Activated T-helper 1 cell treated with anti-CD3 and anti-CD28 coated beads, Interleukin-12 subunit alpha, Interleukin-12 subunit beta, Interleukin-2, Interleukin-4 antibody, amounts not matched to agents 30 ng/mL and 10 ng/mL and 1 ng/mL, durations not matched to agents 14 hours and 24 hours and 36 hours (primary cell): ENCODE measurements at regions of chr22 and their contacts with region 1.

Region 1: GRCh38 chr22:19970479-19971275 is 29.1 kb upstream of the TXNRD2 start:
- DNase-seq: peak; percentile 69
- H3K4me3 Mint-ChIP-seq: no peak overlapping the region
- H3K27ac Mint-ChIP-seq: no peak overlapping the region
- H3K4me1 Mint-ChIP-seq: peaks cover 9% of the 10 kb centered on the region
- H3K27me3 Mint-ChIP-seq: no peaks in the 10 kb centered on the region

Region 2: DNA sequence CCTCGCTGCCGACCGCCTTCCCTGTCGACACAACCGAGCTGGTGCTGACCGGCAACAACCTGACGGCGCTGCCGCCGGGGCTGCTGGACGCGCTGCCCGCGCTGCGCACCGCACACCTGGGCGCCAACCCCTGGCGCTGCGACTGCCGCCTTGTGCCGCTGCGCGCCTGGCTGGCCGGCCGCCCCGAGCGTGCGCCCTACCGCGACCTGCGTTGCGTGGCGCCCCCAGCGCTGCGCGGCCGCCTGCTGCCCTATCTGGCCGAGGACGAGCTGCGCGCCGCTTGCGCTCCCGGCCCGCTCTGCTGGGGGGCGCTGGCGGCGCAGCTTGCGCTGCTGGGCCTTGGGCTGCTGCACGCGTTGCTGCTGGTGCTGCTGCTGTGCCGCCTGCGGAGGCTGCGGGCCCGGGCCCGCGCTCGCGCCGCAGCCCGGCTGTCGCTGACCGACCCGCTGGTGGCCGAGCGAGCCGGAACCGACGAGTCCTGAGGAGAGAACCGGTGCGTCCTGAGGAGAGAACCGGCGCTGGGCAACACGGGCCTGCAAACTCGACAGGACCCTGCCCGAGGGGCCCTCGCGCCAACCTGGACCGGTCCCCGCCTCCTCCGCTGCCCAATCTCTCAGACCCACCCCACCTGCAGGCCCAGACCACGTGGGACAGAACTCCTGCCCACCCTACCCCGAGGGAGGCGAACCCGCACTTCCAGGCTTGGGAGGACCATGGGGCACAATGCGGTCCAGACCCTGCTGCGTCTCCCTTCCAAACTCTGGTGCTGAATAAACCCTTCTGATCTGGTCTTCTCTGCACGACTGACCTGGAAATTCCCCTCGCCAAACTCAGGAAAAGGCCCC is 246.5 kb before region 1 on chr22:
- intact Hi-C with region 1: no loop called
- DNase-seq: no peak
- H3K4me3 Mint-ChIP-seq: no peak overlapping the region
- H3K27ac Mint-ChIP-seq: no peak overlapping the region
- H3K4me1 Mint-ChIP-seq: peaks cover 4% of the 10 kb centered on the region
- H3K27me3 Mint-ChIP-seq: peaks cover 46% of the 10 kb centered on the region

Region 3: DNA sequence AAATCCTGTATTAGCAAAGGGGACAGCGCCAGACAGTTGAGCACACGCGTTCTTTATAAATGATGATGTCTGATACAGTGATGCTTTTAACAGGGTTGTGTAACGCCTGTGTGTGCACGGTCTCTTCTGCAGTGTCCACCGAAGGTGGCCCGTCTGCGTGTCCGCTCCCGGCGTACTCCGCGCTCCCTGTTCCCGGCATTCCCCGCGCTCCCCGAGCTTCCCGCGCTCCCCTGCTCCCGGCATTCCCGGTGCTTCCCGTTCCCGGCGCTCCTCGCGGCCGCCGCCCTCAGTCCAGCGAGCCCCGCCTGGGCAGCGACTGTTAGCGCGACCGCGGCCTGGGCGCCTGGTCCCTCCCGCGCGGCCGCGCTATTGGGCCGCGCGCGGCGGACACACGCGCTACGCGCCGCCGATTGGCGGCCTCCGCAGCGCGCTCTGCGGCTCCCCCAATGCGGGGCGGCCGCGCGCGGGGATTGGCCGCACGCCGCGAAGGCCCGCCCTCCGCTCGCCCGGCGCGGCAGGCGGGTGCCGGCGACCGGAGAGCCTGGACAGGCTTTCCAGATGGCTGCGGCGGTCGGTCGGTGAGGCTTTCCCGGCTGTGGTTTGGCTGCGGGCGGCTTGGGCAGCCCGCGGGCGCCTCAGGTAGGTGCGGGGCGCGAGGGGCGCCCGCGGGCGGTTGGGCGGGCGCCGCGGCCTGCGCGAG is 109.2 kb after region 1 on chr22 and contains the start of gene DGCR8:
- intact Hi-C with region 1: loop called (anchors 1 kb)
- DNase-seq: peak; percentile 74
- H3K4me3 Mint-ChIP-seq: peak within 1 kb of the TSS; percentile 86
- H3K27ac Mint-ChIP-seq: peak within 1 kb of the TSS; percentile 82
- H3K4me1 Mint-ChIP-seq: peaks cover 40% of the 10 kb centered on the region
- H3K27me3 Mint-ChIP-seq: no peaks in the 10 kb centered on the region
- total RNA-seq, gene DGCR8: 79.3 and 81.0 TPM in 2 replicates

Region 4: DNA sequence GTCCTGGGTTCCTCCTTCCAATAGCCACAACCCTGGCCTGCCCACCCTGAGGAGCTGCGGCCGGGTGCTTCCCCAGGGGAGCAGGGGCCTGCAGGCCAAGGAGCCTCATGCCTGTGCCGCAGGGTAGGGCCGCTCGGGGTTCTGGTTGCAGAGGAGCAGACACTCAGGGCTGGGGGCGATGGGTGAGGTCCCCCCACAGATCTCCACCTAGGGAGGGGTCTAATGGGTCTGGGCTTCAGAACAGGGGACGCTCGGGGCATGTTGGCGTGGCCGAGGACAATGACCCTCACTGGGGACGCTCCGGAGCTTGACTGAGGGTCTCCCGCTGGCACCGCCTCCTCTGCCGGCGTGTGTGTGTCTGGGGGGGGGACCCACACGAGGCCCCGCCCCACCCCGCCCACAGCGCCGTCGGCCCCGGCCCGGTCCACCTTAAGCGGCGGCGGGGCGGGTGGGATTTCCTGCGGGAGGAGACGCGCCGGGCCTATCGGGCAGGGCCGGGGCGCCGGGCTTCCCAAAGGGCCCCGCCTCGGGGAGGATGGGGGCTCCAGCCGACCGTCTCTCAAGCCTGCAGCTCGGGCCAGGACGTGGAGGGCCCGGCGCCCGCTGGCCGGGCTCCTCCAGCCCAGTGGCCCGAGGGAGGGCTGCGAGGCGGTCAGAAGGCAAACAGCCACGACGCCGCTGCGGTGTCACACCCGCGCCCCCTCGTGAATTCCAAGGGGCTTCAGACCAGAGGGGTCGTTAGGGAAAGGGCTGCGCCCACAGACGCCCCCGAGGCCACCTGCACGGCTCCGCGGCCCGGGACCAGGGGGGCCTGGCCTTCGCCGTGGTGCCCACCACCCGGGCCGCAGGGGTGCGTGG is 160.3 kb after region 1 on chr22:
- intact Hi-C with region 1: loop called (anchors 1 kb)
- DNase-seq: peak; percentile 67
- H3K4me3 Mint-ChIP-seq: peak overlapping the region; percentile 59
- H3K27ac Mint-ChIP-seq: peak overlapping the region; percentile 61
- H3K4me1 Mint-ChIP-seq: peaks cover 10% of the 10 kb centered on the region
- H3K27me3 Mint-ChIP-seq: no peaks in the 10 kb centered on the region

Region 5: GRCh38 chr22:20268279-20269012 is 297.8 kb after region 1 on chr22 and contains the start of gene RTN4R:
- intact Hi-C with region 1: loop called (anchors 5 kb)
- DNase-seq: peak; percentile 45
- H3K4me3 Mint-ChIP-seq: peak within 1 kb of the TSS; percentile 82
- H3K27ac Mint-ChIP-seq: no peak within 1 kb of the TSS
- H3K4me1 Mint-ChIP-seq: no peaks in the 10 kb centered on the region
- H3K27me3 Mint-ChIP-seq: peaks cover 6% of the 10 kb centered on the region
- total RNA-seq, gene RTN4R: 1.7 and 1.9 TPM in 2 replicates

Region 6: GRCh38 chr22:20283674-20284066 is 313.0 kb after region 1 on chr22:
- intact Hi-C with region 1: loop called (anchors 2 kb)
- DNase-seq: no peak
- H3K4me3 Mint-ChIP-seq: no peak overlapping the region
- H3K27ac Mint-ChIP-seq: no peak overlapping the region
- H3K4me1 Mint-ChIP-seq: no peaks in the 10 kb centered on the region
- H3K27me3 Mint-ChIP-seq: no peaks in the 10 kb centered on the region

Region 7: DNA sequence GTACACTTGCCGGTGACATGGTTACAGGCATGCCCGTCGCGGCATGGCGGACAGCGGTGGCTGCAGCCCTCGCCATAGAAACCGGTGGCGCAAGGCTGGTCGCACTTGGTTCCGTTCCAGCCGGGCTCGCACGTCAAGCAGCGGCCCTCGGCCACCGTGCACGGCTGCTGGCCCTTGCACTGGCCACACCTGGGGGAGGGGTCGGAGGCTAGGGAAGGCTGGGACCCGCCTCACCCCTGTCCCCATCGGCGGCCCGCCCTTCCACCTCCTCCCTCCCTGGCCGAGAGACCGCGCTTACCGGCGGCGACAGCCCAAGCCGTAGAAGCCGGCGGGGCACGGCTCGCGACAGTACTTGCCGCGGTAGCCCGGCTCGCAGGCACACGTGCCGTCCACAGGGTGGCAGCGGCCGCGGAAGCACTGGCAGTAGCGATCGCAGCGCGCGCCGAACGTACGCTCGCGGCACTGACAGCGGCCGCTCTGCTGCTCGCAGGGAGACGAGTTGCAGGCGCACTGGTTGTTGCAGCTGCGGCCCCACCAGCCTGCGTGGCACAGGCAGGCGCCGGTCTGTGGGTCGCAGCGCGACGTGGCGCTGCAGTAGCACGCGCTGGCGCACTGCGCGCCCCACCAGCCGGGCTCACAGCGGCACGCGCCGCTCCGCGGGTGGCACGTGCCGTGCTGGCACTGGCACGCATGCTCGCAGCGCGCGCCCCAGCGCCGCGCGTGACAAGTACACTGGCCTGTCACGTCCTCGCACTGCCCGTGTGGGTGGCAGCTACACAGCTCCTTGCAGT is 460.2 kb after region 1 on chr22:
- intact Hi-C with region 1: loop called (anchors 10 kb)
- DNase-seq: peak; percentile 29
- H3K4me3 Mint-ChIP-seq: peak overlapping the region; percentile 42
- H3K27ac Mint-ChIP-seq: no peak overlapping the region
- H3K4me1 Mint-ChIP-seq: peaks cover 6% of the 10 kb centered on the region
- H3K27me3 Mint-ChIP-seq: peaks cover 60% of the 10 kb centered on the region